Posterior vena cava (tissue), 2 donors: ENCODE measurements at regions of chr6 and their contacts with region 1.

Region 1: DNA sequence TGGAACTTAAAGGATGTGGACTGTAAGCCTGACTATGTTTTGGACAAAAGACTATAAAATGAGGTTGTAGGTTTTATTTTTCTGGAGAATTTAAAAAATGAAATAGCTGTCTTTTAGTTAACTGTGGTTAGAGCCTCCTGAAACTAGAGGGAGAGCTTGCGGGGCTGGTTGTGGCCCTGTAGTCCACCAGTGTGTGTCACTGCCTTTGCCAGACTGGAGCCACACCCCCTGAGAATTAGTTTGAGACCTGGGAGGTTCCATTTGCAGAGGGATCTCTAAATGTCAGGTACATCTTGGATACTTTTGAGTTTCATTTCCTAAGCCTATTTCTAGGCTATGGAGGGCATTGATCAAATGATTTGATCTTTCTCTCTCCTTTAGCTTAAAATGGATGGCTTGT is 20.8 kb downstream of the ZC2HC1B start:
- DNase-seq: no peak

Region 2: GRCh38 chr6:143734641-143735063 is 150.5 kb before region 1 on chr6:
- intact Hi-C with region 1: no loop called
- DNase-seq: no peak

Region 3: GRCh38 chr6:144619984-144620383 is 734.9 kb after region 1 on chr6:
- intact Hi-C with region 1: loop called in 1 of 2 experiments (anchors 5 kb)
- DNase-seq: no peak